Activated CD4-positive, alpha-beta T cell treated with anti-CD3 and anti-CD28 coated beads, Interleukin-2, amount 10 ng/mL, durations not matched to agents 7 days and 5 days (primary cell): ENCODE measurements at regions of chrX and their contacts with region 1.

Region 1: DNA sequence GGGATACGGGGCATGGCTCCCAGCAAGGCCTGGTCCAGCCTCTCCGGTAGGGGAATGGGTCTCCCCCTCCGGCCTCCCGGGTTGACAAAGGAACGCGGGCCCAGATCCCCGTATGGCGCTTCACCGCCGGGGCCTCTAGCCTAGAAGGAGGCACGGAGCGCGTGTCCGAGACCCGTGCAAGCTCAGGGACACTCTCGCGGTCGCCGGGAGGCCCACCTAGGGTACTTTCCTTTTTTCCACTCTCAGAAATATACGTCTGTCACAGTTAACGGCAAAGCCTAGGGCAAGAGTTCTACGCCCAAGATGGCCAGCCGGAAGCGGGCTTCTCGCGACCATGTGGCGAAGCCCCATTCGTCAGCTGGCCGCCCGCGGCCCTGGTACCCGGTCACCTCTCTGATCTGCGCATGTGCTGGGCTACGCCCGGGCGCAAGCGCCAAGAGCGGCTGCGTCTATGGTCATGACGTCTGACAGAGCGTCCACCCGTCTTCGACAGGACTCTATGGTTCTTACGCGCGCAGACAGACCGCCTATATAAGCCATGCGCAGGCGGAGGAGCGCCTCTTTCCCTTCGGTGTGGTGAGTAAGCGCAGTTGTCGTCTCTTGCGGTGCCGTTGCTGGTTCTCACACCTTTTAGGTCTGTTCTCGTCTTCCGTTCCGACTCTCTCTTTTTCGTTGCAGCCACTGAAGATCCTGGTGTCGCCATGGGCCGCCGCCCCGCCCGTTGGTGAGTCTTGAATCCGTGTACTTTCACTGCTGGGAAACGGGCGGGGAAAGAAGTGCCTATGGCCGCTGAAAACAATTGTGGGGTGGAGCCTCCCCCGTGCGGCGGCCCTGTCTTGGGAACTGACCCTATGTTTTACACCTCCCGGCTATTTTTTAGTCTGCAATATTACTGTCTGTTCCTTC is at the start of gene RPL10:
- DNase-seq: peak; percentile 91
- H3K4me3 Mint-ChIP-seq: peak within 1 kb of the TSS; percentile 96
- H3K27ac Mint-ChIP-seq: peak within 1 kb of the TSS; percentile 100
- H3K4me1 Mint-ChIP-seq: peaks cover 13% of the 10 kb centered on the region
- H3K27me3 Mint-ChIP-seq: no peaks in the 10 kb centered on the region
- total RNA-seq, gene RPL10: 1,884 to 2,727 TPM

Region 2: DNA sequence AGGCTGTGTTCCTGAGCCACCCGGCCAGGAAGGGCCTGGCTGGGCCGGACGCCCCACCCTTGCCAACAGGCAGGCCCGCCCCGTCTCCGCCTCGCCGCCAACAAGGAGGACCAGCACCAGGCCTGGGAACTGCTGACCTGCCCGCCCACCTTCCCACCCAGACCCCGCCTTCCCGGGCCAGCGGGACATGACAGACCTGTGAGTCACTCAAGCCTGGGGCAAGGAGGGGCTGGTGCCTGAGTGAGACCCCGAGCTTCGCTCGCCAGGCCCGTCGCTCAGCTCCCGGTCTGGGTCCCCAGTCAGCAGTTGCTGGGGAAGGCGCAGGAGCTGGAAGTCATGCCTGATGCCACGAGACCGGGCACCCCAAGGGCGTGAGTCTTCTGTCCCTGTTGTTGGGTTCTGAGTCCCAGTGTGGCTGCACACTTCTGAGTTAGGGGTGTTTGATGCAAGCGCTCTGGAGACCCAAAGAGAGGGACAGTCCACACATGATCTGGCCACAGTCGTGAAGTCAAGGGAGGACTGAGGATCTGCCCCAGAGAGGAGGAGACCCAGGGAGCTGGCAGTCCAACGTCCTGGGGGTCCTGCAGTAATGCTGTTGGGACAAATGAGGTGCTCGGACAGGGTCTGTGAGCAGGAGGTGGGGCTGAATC is 11.3 kb after region 1 on chrX and contains the start of gene DNASE1L1:
- CTCF ChIA-PET with region 1: interaction called, 12 read pairs
- POLR2A ChIA-PET with region 1: interaction called, 4 read pairs
- DNase-seq: no peak
- H3K4me3 Mint-ChIP-seq: peak within 1 kb of the TSS; percentile 57
- H3K27ac Mint-ChIP-seq: peak within 1 kb of the TSS; percentile 72
- H3K4me1 Mint-ChIP-seq: peaks cover 20% of the 10 kb centered on the region
- H3K27me3 Mint-ChIP-seq: no peaks in the 10 kb centered on the region
- total RNA-seq, gene DNASE1L1: 21.8 to 24.3 TPM

Region 3: GRCh38 chrX:154452823-154453222 is 54.8 kb after region 1 on chrX:
- CTCF ChIA-PET with region 1: no interaction called
- POLR2A ChIA-PET with region 1: no interaction called
- DNase-seq: no peak
- H3K4me3 Mint-ChIP-seq: no peak overlapping the region
- H3K27ac Mint-ChIP-seq: no peak overlapping the region
- H3K4me1 Mint-ChIP-seq: peaks cover 5% of the 10 kb centered on the region
- H3K27me3 Mint-ChIP-seq: no peaks in the 10 kb centered on the region